HepG2 (cell line): ENCODE measurements at regions of chr10 and their contacts with region 1.

Region 1: DNA sequence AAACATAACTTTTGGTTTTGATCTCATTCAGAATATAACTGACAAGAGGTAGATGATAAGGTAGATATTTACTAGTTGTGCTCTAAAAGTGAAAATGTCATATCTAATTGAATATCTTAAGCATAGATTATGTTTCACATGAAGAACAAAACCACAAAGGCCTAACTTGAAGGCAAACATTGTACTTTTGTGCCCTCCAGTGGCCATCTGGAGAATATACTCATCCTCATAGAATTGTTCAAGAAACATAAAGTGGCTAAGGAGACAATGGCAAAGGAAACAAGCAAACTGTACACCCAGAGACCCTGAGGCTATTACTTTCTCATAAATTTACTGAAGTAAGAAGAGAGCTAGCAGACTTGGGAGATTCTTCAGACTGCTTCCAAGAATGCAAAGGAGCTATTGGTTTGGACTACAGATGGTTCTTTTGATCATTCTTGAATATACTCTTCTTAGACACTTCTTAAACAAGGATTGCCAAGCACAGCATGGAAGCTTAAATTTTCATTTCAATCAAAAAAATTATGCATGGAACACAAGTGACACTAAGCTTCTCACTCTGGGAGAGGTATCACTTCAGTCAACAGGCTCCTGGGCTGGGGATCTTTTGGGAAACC is 98.2 kb upstream of the DKK1 start:
- DNase-seq: peak; percentile 65
- ATAC-seq: peak; percentile 71
- H3K4me3 ChIP-seq: no peak overlapping the region
- H3K27ac ChIP-seq: no peak overlapping the region
- H3K4me1 ChIP-seq: peaks cover 19% of the 10 kb centered on the region
- H3K27me3 ChIP-seq: no peaks in the 10 kb centered on the region
- CTCF ChIP-seq: peak; percentile 89
- EP300 ChIP-seq: no peak
- POLR2A ChIP-seq: no peak
- RAD21 ChIP-seq: peak; percentile 63; the same call in 1 of the 2 replicates

Region 2: GRCh38 chr10:51001587-51001986 is 1214.3 kb before region 1 on chr10:
- CTCF ChIA-PET with region 1: no interaction called
- POLR2A ChIA-PET with region 1: no interaction called
- in situ Hi-C with region 1: loop called (anchors 25 kb)
- intact Hi-C with region 1: loop called (anchors 2 kb)
- DNase-seq: no peak
- ATAC-seq: peak; percentile 71
- H3K4me3 ChIP-seq: no peak overlapping the region
- H3K27ac ChIP-seq: no peak overlapping the region
- H3K4me1 ChIP-seq: no peaks in the 10 kb centered on the region
- H3K27me3 ChIP-seq: peaks cover 0 to 15% of the 10 kb centered on the region in 2 experiments; a peak in 3 of 5 replicates
- CTCF ChIP-seq: peak; percentile 40
- EP300 ChIP-seq: no peak
- POLR2A ChIP-seq: no peak
- RAD21 ChIP-seq: no peak

Region 3: DNA sequence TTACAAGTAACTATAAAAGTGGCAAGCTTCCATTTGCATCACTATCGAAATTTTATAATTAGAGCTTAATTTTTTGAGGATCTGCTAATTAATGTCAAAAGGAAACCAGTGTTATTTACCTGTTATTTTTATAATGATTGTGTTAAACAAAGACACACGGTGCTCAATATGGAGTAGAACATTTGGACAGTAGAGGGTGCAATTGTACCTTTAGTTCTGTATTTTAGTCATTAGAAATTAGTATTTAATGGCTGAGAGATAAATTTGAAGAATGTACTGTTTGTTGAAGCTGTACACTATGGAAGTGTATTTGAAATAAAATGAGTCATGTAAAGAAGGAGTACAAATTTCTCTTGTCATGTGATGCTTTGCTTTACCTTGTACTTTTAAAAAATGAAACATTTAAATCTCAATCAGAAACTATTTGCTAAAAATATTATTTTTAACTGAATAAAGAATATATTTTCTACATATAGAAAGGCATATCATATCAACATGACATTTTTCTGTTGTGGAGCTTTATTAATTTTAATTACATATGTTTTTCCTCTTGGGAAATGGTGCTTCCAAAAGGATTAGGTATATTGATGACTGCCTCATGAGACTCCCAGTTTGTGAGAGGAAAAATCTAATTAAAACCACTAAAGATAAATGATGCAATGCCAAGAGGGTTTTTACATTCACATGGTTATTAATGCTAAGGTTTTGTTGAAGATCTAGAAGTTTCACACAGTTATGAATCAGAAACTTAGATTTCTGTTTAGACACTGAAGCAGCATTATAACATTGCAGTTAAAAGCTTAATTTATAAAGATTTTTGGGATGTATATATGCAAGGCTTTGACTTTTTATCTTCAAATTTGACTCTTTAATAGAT is 1152.0 kb before region 1 on chr10:
- CTCF ChIA-PET with region 1: interaction called, 7 read pairs
- POLR2A ChIA-PET with region 1: no interaction called
- in situ Hi-C with region 1: no loop called
- intact Hi-C with region 1: loop called (anchors 1 kb)
- DNase-seq: peak; percentile 7
- ATAC-seq: peak; percentile 52; the same call in 2 of the 3 replicates
- H3K4me3 ChIP-seq: no peak overlapping the region
- H3K27ac ChIP-seq: no peak overlapping the region
- H3K4me1 ChIP-seq: no peaks in the 10 kb centered on the region
- H3K27me3 ChIP-seq: no peaks in the 10 kb centered on the region
- CTCF ChIP-seq: peak; percentile 52
- EP300 ChIP-seq: no peak
- POLR2A ChIP-seq: no peak
- RAD21 ChIP-seq: 0 out of 2 replicates have a peak, but pooled peaks have one; percentile 16

Region 4: GRCh38 chr10:51960494-51960895 is 255.4 kb before region 1 on chr10:
- CTCF ChIA-PET with region 1: no interaction called
- POLR2A ChIA-PET with region 1: no interaction called
- in situ Hi-C with region 1: no loop called
- intact Hi-C with region 1: loop called (anchors 1 kb)
- DNase-seq: peak; percentile 3
- ATAC-seq: peak; percentile 56; the same call in 2 of the 3 replicates
- H3K4me3 ChIP-seq: no peak overlapping the region
- H3K27ac ChIP-seq: no peak overlapping the region
- H3K4me1 ChIP-seq: no peaks in the 10 kb centered on the region
- H3K27me3 ChIP-seq: no peaks in the 10 kb centered on the region
- CTCF ChIP-seq: peak; percentile 54
- EP300 ChIP-seq: no peak
- POLR2A ChIP-seq: no peak
- RAD21 ChIP-seq: no peak

Region 5: DNA sequence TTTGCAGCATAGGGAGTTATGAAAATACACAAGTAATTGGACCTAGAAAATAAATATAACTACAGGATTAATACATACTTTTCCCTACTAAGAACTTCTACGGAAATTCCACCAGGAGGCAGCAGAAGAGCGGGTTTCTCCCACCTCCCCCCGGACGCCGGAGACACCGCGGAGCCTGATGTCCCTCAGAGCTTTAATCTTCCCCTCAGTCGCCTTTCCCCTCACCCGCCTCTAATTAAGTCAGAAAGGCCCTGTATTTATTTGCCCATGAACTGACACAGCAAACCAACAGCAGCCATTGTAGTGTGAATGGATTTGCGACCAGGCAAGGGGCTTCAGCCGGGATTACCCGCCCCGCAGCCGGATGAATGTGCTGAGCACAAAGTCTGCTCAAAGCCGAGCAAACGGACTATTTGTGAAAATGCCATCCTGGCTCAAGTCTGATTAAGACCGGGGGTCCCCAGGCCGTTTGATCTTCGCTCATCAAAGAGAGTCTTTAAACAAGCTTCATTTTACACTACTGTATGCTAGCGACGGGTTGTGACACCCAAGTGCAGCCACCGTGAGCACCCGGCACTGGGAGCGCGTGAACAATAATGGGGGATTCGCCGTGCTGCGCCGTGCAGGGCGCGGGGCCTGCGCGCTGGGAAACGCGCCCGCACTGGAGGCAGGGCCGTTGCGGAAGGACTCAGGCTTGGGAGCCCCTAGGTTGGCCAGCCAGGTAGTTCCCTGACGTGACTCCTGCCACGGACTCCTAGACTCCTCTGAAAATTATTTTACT is 92.6 kb after region 1 on chr10:
- CTCF ChIA-PET with region 1: interaction called, 20 read pairs
- POLR2A ChIA-PET with region 1: no interaction called
- in situ Hi-C with region 1: no loop called
- intact Hi-C with region 1: loop called (anchors 1 kb)
- DNase-seq: peak; percentile 72
- ATAC-seq: peak; percentile 93
- H3K4me3 ChIP-seq: peak overlapping the region; percentile 56 to 70 (median 59)
- H3K27ac ChIP-seq: peak overlapping the region; percentile 50
- H3K4me1 ChIP-seq: peaks cover 31% of the 10 kb centered on the region
- H3K27me3 ChIP-seq: peaks cover 0 to 6% of the 10 kb centered on the region in 2 experiments; a peak in 2 of 5 replicates
- CTCF ChIP-seq: peak; percentile 87
- EP300 ChIP-seq: peak in 1 of 2 experiments; percentile 54; a peak in 1 of 4 replicates
- POLR2A ChIP-seq: 0 out of 4 replicates have a peak, but pooled peaks of 1 of the 2 experiments have one; percentile 21
- RAD21 ChIP-seq: peak; percentile 95

Region 6: DNA sequence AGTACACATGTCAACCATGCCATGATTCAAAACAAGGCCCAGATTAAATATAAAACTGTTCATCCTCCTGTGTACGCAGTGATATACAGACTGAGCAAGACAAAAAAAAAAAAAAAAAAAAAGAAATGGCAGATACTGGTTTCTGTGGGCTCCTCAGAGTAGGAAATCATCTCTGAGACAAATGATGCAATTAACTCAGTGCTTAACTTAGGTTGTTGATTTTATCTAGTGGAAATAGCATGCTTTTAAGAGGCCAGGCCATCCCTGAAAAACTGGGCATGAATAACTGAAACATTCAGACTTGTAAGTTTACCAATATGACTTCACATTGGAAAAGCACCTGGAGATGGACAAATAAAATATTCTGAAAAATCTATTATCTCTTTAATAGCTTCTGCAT is 167.2 kb after region 1 on chr10:
- CTCF ChIA-PET with region 1: no interaction called
- POLR2A ChIA-PET with region 1: no interaction called
- in situ Hi-C with region 1: no loop called
- intact Hi-C with region 1: no loop called
- DNase-seq: no peak
- ATAC-seq: no peak
- H3K4me3 ChIP-seq: no peak overlapping the region
- H3K27ac ChIP-seq: no peak overlapping the region
- H3K4me1 ChIP-seq: peaks cover 22% of the 10 kb centered on the region
- H3K27me3 ChIP-seq: no peaks in the 10 kb centered on the region
- CTCF ChIP-seq: no peak
- EP300 ChIP-seq: no peak
- POLR2A ChIP-seq: no peak
- RAD21 ChIP-seq: no peak